ENCODE measurements at regions of chr6 and their contacts with region 1.

Region 1: DNA sequence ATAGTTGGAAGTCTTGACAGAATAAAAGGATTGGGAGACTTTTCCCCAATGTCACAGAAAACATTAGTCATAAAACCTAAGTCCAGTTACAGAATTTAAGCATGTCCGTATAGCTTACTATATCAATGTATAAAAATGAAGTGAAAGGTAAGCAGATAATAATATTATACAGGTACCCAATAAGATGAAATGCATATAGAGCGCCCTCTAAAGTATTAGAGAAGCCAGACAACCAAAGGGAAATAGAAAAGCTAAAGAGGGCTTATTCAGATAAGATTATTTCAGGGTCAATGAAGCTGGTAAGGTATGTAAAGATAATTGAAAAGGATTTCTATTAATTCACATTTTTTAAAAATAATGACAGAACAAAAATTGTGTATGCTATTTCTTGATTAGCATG is 947.7 kb upstream of the MAP3K7 start:
- DNase-seq: peak; percentile 9
- H3K4me3 ChIP-seq: no peak overlapping the region
- H3K27ac ChIP-seq: no peak overlapping the region
- H3K4me1 ChIP-seq: no peaks in the 10 kb centered on the region
- H3K27me3 ChIP-seq: no peaks in the 10 kb centered on the region
- CTCF ChIP-seq: peak; percentile 6 to 21
- POLR2A ChIP-seq: no peak

Region 2: GRCh38 chr6:90940812-90941481 is 593.7 kb before region 1 on chr6:
- CTCF ChIA-PET with region 1: no interaction called
- POLR2A ChIA-PET with region 1: no interaction called
- dilution Hi-C with region 1: no loop called
- intact Hi-C with region 1: loop called (anchors 10 kb)
- DNase-seq: peak; percentile 75
- H3K4me3 ChIP-seq: no peak overlapping the region
- H3K27ac ChIP-seq: no peak overlapping the region
- H3K4me1 ChIP-seq: no peaks in the 10 kb centered on the region
- H3K27me3 ChIP-seq: peaks cover 0 to 2% of the 10 kb centered on the region in 2 experiments
- CTCF ChIP-seq: peak; percentile 25 to 35
- POLR2A ChIP-seq: no peak

Region 3: GRCh38 chr6:91081452-91082067 is 453.1 kb before region 1 on chr6:
- CTCF ChIA-PET with region 1: interaction called, 5 read pairs
- POLR2A ChIA-PET with region 1: no interaction called
- dilution Hi-C with region 1: no loop called
- intact Hi-C with region 1: loop called (anchors 5 kb)
- DNase-seq: peak; percentile 52
- H3K4me3 ChIP-seq: no peak overlapping the region
- H3K27ac ChIP-seq: no peak overlapping the region
- H3K4me1 ChIP-seq: no peaks in the 10 kb centered on the region
- H3K27me3 ChIP-seq: no peaks in the 10 kb centered on the region
- CTCF ChIP-seq: peak; percentile 39 to 47
- POLR2A ChIP-seq: no peak

Region 4: GRCh38 chr6:91328241-91328640 is 206.4 kb before region 1 on chr6:
- CTCF ChIA-PET with region 1: interaction called, 60 read pairs
- POLR2A ChIA-PET with region 1: no interaction called
- dilution Hi-C with region 1: no loop called
- intact Hi-C with region 1: loop called (anchors 1 kb)
- DNase-seq: no peak
- H3K4me3 ChIP-seq: no peak overlapping the region
- H3K27ac ChIP-seq: no peak overlapping the region
- H3K4me1 ChIP-seq: no peaks in the 10 kb centered on the region
- H3K27me3 ChIP-seq: no peaks in the 10 kb centered on the region
- CTCF ChIP-seq: no peak
- POLR2A ChIP-seq: no peak

Region 5: DNA sequence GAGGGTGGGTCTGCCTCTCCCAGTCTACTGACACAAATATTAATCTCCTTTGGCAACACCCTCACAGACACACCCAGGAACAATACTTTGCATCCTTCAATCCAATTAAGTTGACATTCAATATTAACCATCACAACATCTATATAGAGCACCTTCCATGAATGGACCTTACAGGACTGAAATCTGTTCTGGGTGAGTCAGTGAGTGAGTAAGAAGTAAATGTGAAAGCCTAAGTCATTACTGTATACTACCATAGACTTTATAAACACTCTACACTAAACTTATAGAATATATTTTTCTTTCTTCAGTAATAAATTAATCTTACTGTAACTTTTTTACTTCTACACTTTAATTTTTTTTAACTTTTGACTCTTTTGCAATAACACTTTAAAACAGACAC is 46.0 kb after region 1 on chr6:
- CTCF ChIA-PET with region 1: no interaction called
- POLR2A ChIA-PET with region 1: no interaction called
- dilution Hi-C with region 1: no loop called
- intact Hi-C with region 1: no loop called
- DNase-seq: no peak
- H3K4me3 ChIP-seq: no peak overlapping the region
- H3K27ac ChIP-seq: no peak overlapping the region
- H3K4me1 ChIP-seq: no peaks in the 10 kb centered on the region
- H3K27me3 ChIP-seq: no peaks in the 10 kb centered on the region
- CTCF ChIP-seq: no peak
- POLR2A ChIP-seq: no peak